Ovary (tissue), 10 donors: ENCODE measurements at regions of chr9 and their contacts with region 1.

Region 1: DNA sequence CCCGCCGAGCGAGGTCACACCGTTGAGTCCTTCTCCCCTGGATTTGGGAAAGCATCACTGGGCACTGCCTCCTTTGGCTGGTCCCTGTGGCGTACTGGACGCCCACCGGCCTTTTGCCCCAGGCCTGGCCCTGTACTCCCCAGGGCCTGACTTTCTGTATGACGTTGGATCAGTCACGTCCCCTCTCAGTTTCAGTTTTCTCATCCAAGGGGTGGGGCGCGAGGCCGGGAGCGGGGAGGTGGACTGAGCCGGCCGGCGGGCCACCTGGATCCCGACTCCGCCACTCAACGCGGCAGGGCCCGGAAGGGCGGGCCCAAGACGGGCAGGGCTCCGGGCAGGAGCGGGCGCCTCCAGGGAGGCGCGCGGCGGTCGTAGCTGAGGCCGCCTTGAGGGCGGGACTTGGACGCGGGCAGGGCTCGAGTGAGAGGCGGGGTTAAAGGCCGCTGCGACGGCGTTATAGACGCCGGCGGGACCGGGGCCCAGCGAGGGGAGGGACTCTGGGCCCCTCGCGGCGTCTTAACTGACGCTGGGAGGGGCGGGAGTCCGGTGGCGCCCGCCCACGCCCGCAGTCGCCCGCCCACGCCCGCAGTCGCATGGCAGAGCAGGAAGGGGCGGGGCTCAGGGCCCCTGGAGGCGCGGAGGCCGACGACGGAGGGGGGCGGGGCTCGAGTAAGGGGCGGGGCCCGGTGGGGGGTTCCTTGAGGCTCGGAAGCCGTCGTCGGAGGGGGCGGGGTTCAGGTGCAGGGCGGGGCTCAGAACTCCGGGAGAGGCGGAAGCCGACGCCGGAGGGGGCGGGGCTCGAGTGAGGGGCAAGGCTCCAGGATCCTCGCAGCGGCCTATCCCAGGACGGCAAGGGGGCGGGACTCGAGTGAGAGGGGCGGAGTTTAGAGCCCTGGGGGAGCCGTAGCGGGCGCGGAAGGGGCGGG is 549 bp upstream of the CARD19 start:
- DNase-seq: peak; percentile 100
- H3K4me3 ChIP-seq: peak overlapping the region; percentile 46
- H3K27ac ChIP-seq: peak overlapping the region; percentile 91 to 96
- H3K4me1 ChIP-seq: peaks cover 23% of the 10 kb centered on the region
- H3K27me3 ChIP-seq: no peaks in the 10 kb centered on the region
- CTCF ChIP-seq: no peak
- EP300 ChIP-seq: no peak
- POLR2A ChIP-seq: peak; percentile 90

Region 2: DNA sequence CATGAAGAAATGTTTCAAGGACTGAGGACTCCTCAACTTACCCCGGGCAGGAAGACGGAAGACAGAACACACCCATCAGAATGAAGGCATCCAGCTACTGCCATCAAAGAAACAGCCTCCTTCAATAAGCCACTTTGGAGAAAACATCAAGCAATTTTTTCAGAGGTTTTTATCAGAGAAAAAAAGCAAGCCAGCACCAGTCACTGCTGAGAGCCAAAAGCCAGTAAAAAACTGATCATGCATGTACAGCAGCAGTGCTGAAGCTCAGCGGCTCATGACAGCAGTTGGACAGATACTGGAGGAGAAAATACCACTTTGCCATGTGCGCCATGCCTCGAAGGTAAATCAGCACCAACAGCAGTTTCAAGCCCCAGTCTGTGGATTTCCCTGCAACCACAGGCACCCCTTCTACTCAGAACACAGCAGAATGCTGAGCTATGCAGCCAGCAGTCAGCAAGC is 207.6 kb before region 1 on chr9:
- intact Hi-C with region 1: no loop called
- DNase-seq: no peak
- H3K4me3 ChIP-seq: no peak overlapping the region
- H3K27ac ChIP-seq: no peak overlapping the region
- H3K4me1 ChIP-seq: no peaks in the 10 kb centered on the region
- H3K27me3 ChIP-seq: no peaks in the 10 kb centered on the region
- CTCF ChIP-seq: no peak
- EP300 ChIP-seq: no peak
- POLR2A ChIP-seq: no peak

Region 3: GRCh38 chr9:93003552-93004407 is 91.7 kb before region 1 on chr9:
- intact Hi-C with region 1: loop called in 1 of 4 experiments (anchors 10 kb)
- DNase-seq: peak; percentile 69 to 81 (median 76)
- H3K4me3 ChIP-seq: peak overlapping the region; percentile 29
- H3K27ac ChIP-seq: peak overlapping the region in 1 of 2 donors; percentile 8
- H3K4me1 ChIP-seq: peaks cover 3% of the 10 kb centered on the region
- H3K27me3 ChIP-seq: no peaks in the 10 kb centered on the region
- CTCF ChIP-seq: peak; percentile 71 to 82 (median 79)
- EP300 ChIP-seq: no peak
- POLR2A ChIP-seq: no peak

Region 4: GRCh38 chr9:93058355-93059096 is 36.9 kb before region 1 on chr9 and contains the start of gene SUSD3:
- intact Hi-C with region 1: loop called in 3 of 4 experiments (anchors 5 kb)
- DNase-seq: peak; percentile 91 to 96 (median 95)
- H3K4me3 ChIP-seq: peak within 1 kb of the TSS; percentile 56
- H3K27ac ChIP-seq: peak within 1 kb of the TSS; percentile 78 to 87
- H3K4me1 ChIP-seq: peaks cover 41% of the 10 kb centered on the region
- H3K27me3 ChIP-seq: no peaks in the 10 kb centered on the region
- CTCF ChIP-seq: no peak
- EP300 ChIP-seq: no peak
- POLR2A ChIP-seq: peak; percentile 45
- total RNA-seq, gene SUSD3: 30.5 to 66.1 (median 42.4) TPM

Region 5: DNA sequence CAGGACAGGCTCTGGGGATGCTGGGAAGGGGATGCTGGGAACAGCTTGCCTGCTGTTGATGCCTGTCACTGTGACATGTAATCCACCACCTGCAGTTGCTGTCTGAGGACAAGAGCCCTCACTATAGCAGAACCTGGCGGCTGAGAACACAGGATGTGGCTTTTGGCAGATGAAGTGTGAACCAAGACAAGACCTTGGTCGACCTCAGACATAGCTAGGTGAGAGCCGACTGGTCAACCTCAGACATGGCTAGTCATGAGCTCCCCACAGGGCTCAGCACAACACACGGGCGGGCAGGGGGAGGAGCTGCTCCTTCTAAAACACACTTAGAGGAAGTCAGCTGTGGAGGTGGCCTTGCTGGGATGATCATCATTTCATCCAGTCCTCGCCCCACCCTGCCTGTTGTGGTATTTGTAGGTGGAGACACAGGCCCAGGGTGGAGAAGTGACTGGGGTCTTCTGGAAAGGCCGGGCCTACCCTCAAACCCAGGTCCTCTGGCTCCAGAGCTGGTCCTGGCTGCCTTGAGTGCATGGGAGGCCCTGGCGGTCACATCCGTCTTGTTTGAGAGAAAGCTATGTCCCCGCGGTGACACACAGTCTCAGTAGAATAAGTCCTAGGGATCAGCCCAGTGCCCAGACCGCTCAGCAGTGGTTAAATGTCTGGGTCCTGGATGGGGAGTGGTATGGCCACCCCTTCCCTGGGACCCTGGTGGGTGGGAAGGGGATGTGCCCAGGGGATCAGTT is 30.9 kb before region 1 on chr9:
- intact Hi-C with region 1: loop called in 3 of 4 experiments (anchors 5 kb)
- DNase-seq: no peak
- H3K4me3 ChIP-seq: no peak overlapping the region
- H3K27ac ChIP-seq: no peak overlapping the region
- H3K4me1 ChIP-seq: peaks cover 21% of the 10 kb centered on the region
- H3K27me3 ChIP-seq: no peaks in the 10 kb centered on the region
- CTCF ChIP-seq: no peak
- EP300 ChIP-seq: no peak
- POLR2A ChIP-seq: no peak

Region 6: DNA sequence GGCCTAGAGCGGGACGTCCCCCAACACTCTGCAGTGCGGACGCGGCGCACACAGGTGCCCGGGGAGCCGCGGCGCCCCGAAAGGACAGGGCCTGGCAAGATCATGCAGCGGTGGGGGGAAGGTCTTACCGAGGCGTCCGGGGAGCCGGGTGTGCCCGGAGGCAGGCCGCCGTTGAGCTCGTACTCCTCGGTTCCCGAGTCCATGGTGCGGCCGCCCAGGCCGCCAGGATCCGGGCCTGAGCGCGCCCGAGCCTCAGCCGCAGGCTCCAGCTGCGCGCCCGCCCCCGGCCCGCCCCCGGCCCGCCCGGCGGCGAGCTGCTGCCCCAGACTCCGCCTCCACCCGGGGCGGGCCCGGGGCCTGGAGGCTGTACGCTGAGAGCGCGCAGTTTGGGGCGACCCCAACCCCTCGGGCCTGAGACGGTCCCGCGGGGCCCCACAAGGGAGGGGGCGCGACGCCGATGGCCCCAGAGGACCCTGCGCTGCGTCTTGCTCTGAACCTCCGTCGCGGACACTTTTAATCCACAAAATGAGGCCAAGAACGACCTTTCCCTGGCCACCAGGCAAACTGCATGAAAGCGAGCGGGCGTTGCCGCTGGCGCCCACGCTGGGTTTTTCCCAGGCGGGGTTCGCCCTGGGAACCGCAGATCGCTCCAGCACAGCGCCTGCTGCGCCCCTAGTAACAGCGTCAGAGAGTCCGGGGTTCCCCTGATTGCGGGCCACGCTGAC is 38.7 kb after region 1 on chr9 and contains the start of gene NINJ1:
- intact Hi-C with region 1: loop called in 1 of 4 experiments (anchors 5 kb)
- DNase-seq: peak; percentile 73 to 87 (median 82)
- H3K4me3 ChIP-seq: peak within 1 kb of the TSS; percentile 76
- H3K27ac ChIP-seq: peak within 1 kb of the TSS; percentile 70 to 96
- H3K4me1 ChIP-seq: peaks cover 31% of the 10 kb centered on the region
- H3K27me3 ChIP-seq: no peaks in the 10 kb centered on the region
- CTCF ChIP-seq: peak in 1 of 3 donors; percentile 4
- EP300 ChIP-seq: no peak
- POLR2A ChIP-seq: peak; percentile 78
- total RNA-seq, gene NINJ1: 35.2 to 75.2 (median 40.6) TPM

Region 7: GRCh38 chr9:93453047-93453914 is 357.8 kb after region 1 on chr9 and contains the start of gene FAM120AOS:
- intact Hi-C with region 1: loop called in 1 of 4 experiments (anchors 10 kb)
- DNase-seq: peak; percentile 84 to 90 (median 85)
- H3K4me3 ChIP-seq: peak within 1 kb of the TSS; percentile 89
- H3K27ac ChIP-seq: peak within 1 kb of the TSS; percentile 71 to 86
- H3K4me1 ChIP-seq: peaks cover 8% of the 10 kb centered on the region
- H3K27me3 ChIP-seq: no peaks in the 10 kb centered on the region
- CTCF ChIP-seq: no peak
- EP300 ChIP-seq: no peak
- POLR2A ChIP-seq: peak; percentile 48
- total RNA-seq, gene FAM120AOS: 38.3 to 49.0 (median 40.3) TPM

Region 8: GRCh38 chr9:93549611-93550010 is 454.1 kb after region 1 on chr9:
- intact Hi-C with region 1: no loop called
- DNase-seq: no peak
- H3K4me3 ChIP-seq: no peak overlapping the region
- H3K27ac ChIP-seq: no peak overlapping the region
- H3K4me1 ChIP-seq: peaks cover 2% of the 10 kb centered on the region
- H3K27me3 ChIP-seq: no peaks in the 10 kb centered on the region
- CTCF ChIP-seq: no peak
- EP300 ChIP-seq: no peak
- POLR2A ChIP-seq: no peak